Heart left ventricle (tissue), 16 donors: ENCODE measurements at regions of chr2 and their contacts with region 1.

Region 1: GRCh38 chr2:147910990-147911473 is 66.2 kb downstream of the ACVR2A start:
- DNase-seq: peak in 1 of 5 donors; percentile 16
- ATAC-seq: peak in 1 of 4 donors; percentile 42
- H3K4me3 ChIP-seq: no peak overlapping the region
- H3K27ac ChIP-seq: no peak overlapping the region
- H3K4me1 ChIP-seq: peaks cover 0 to 22% (median 5%) of the 10 kb centered on the region in 12 donors
- H3K27me3 ChIP-seq: no peaks in the 10 kb centered on the region
- CTCF ChIP-seq: peak; percentile 71 to 92 (median 85)
- POLR2A ChIP-seq: no peak

Region 2: DNA sequence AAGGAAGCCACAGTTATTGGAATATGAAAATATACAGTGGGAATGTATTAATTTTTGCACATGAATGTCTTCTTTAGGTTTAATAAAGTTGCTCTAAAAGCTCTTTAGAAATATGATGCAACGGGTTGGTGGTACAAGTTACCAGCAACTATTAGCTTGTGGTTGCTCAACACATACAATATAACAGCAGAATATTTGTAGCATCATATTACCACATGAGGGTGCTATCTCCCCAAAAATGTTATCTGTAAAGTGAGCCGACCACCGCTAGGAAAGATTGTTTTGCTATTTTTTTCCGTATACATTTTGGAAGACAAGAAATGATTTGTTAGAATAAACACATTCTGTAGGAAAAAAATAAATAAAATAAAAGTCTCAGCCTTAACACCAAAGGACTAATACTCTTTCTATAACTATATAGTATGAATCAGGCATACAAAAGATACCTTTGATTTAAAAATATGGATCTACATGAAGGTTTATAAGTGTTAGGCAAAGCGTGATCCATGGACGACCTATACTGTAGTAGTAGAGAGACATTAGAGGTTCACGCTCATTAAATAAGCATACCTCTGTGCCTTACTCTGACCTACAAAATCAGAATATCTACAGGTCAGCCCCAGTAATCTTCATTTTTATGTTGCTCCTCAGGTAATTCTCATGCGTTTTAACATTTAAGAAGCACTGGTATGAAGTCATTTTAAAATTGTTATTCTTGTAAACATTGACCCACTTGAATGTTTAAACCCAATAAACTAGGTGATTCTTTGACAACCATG is 1176.8 kb before region 1 on chr2:
- intact Hi-C with region 1: loop called in 6 of 10 experiments (anchors 5 to 10 kb)
- DNase-seq: no peak
- ATAC-seq: no peak
- H3K4me3 ChIP-seq: no peak overlapping the region
- H3K27ac ChIP-seq: no peak overlapping the region
- H3K4me1 ChIP-seq: no peaks in the 10 kb centered on the region
- H3K27me3 ChIP-seq: no peaks in the 10 kb centered on the region
- CTCF ChIP-seq: peak; percentile 31 to 63 (median 44)
- POLR2A ChIP-seq: no peak

Region 3: DNA sequence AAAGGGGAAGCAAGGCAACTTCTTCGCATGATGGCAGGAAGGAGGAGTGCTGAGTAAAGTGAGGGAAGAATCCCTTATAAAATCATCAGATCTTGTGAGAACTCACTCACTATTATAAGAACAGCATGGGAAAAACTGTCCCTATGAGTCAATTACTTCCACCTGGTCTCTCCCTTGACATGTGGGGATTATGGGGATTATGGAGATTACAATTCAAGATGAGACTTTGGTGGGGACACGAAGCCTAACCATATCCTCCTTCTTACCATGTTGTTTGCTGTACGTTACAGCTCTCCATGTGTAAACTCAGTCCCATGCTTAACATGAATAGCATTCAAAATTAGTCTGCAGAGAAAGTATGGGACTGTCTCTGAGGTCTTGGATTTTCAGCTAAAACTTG is 1163.0 kb before region 1 on chr2:
- intact Hi-C with region 1: loop called in 1 of 10 experiments (anchors 10 kb)
- DNase-seq: no peak
- ATAC-seq: no peak
- H3K4me3 ChIP-seq: no peak overlapping the region
- H3K27ac ChIP-seq: no peak overlapping the region
- H3K4me1 ChIP-seq: no peaks in the 10 kb centered on the region
- H3K27me3 ChIP-seq: peaks cover 0 to 5% (median 0%) of the 10 kb centered on the region in 9 donors
- CTCF ChIP-seq: no peak
- POLR2A ChIP-seq: no peak

Region 4: GRCh38 chr2:146927080-146927711 is 983.8 kb before region 1 on chr2:
- intact Hi-C with region 1: loop called in 1 of 10 experiments (anchors 5 kb)
- DNase-seq: no peak
- ATAC-seq: peak in 1 of 4 donors; percentile 51
- H3K4me3 ChIP-seq: no peak overlapping the region
- H3K27ac ChIP-seq: no peak overlapping the region
- H3K4me1 ChIP-seq: no peaks in the 10 kb centered on the region
- H3K27me3 ChIP-seq: no peaks in the 10 kb centered on the region
- CTCF ChIP-seq: peak in 8 of 12 donors; percentile 5 to 35 (median 20)
- POLR2A ChIP-seq: no peak

Region 5: DNA sequence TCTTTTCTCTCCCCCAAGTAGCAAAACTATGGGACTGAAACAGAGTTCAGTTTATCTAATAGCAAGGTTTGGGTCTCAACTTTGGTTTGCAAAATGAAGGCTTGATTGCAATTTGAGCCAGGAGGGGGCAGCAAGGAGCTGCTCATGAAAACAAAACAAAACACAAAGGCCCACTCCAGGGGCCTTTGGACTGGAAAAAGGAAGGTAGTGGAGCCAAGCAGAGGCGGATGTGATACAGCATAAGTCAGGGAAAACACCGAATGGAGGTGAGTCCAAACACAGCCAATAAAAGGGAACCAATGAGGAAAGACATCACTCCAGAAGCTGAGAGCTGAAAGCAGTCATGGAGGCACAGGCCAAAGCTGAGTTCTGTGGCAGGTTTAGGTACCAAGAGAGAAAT is 865.9 kb before region 1 on chr2:
- intact Hi-C with region 1: loop called in 7 of 10 experiments (anchors 2 to 10 kb)
- DNase-seq: peak in 1 of 5 donors; percentile 9
- ATAC-seq: peak in 1 of 4 donors; percentile 24
- H3K4me3 ChIP-seq: no peak overlapping the region
- H3K27ac ChIP-seq: no peak overlapping the region
- H3K4me1 ChIP-seq: no peaks in the 10 kb centered on the region
- H3K27me3 ChIP-seq: no peaks in the 10 kb centered on the region
- CTCF ChIP-seq: peak; percentile 32 to 69 (median 53)
- POLR2A ChIP-seq: no peak

Region 6: GRCh38 chr2:147082850-147083522 is 828.0 kb before region 1 on chr2:
- intact Hi-C with region 1: loop called (anchors 1 to 5 kb)
- DNase-seq: peak in 2 of 5 donors; percentile 20 to 27
- ATAC-seq: peak in 2 of 4 donors; percentile 33 to 37
- H3K4me3 ChIP-seq: no peak overlapping the region
- H3K27ac ChIP-seq: no peak overlapping the region
- H3K4me1 ChIP-seq: peaks cover 0 to 6% (median 0%) of the 10 kb centered on the region in 12 donors
- H3K27me3 ChIP-seq: no peaks in the 10 kb centered on the region
- CTCF ChIP-seq: peak; percentile 76 to 89 (median 84)
- POLR2A ChIP-seq: no peak

Region 7: DNA sequence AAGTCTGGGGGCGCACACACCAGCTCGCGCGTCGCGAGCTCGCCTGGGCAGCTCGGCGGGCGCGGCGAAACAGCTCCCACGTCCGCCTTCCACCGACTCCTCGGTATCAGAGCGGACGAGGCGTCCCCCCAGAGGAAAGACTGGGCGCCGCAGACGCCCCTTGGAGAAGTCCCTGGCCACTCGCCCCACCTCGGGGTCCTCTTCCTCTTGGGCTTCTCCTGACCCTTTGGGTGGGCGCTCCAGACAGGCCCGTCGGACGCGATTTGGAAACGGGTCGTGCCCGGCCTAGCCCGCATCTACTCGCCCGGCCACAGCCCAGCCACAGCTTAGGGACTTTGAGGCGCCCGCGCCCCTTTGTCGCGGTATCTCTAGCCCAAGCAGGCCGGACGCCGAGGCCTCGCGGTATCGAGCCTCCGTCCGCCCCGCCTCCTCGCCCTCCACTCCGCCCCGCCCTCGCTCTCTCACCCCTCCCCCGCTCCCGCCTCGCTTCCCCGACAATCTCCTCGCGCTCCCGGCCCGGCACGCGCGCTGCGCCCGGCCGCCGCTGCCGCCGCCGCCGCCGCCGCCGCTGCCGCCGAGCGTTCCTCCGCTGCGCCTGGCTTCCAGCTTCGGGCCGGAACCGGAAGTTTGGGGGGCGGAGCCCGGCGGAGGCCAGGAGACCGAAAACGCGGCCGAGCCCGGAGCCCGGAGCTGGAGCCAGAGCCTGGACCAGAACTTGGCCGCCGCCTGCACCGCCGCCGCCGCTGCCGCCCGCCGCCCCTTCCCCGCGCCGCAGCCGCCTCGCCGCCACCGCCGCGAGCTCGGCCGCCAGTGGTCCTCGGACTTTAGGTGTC is 67.0 kb before region 1 on chr2:
- intact Hi-C with region 1: loop called in 4 of 10 experiments (anchors 2 to 10 kb)
- DNase-seq: peak; percentile 94 to 96 (median 94)
- ATAC-seq: peak; percentile 88 to 97 (median 96)
- H3K4me3 ChIP-seq: peak overlapping the region; percentile 71 to 94 (median 80)
- H3K27ac ChIP-seq: peak overlapping the region; percentile 91 to 98 (median 97)
- H3K4me1 ChIP-seq: peaks cover 0 to 36% (median 21%) of the 10 kb centered on the region in 12 donors
- H3K27me3 ChIP-seq: peaks cover 0 to 5% (median 0%) of the 10 kb centered on the region in 9 donors
- CTCF ChIP-seq: peak in 8 of 12 donors; percentile 14 to 48 (median 35)
- POLR2A ChIP-seq: peak in 1 of 2 donors; percentile 48

Region 8: GRCh38 chr2:147925886-147926285 is 14.9 kb after region 1 on chr2:
- intact Hi-C with region 1: no loop called
- DNase-seq: no peak
- ATAC-seq: no peak
- H3K4me3 ChIP-seq: no peak overlapping the region
- H3K27ac ChIP-seq: no peak overlapping the region
- H3K4me1 ChIP-seq: peaks cover 0 to 10% (median 5%) of the 10 kb centered on the region in 12 donors
- H3K27me3 ChIP-seq: no peaks in the 10 kb centered on the region
- CTCF ChIP-seq: no peak
- POLR2A ChIP-seq: no peak